ENCODE measurements at regions of chr20 and their contacts with region 1.

Region 1: GRCh38 chr20:31723319-31724078 is 831 bp upstream of the BCL2L1 start:
- DNase-seq: peak; percentile 96 to 98
- ATAC-seq: peak; percentile 81 to 84
- H3K4me3 ChIP-seq: peak overlapping the region; percentile 76 to 87 (median 82)
- H3K27ac ChIP-seq: peak overlapping the region; percentile 97 to 98 (median 97)
- H3K4me1 ChIP-seq: peaks cover 19 to 23% of the 10 kb centered on the region in 2 donors
- H3K27me3 ChIP-seq: no peaks in the 10 kb centered on the region
- CTCF ChIP-seq: peak; percentile 97 to 99 (median 98)
- POLR2A ChIP-seq: peak; percentile 85 to 92

Region 2: DNA sequence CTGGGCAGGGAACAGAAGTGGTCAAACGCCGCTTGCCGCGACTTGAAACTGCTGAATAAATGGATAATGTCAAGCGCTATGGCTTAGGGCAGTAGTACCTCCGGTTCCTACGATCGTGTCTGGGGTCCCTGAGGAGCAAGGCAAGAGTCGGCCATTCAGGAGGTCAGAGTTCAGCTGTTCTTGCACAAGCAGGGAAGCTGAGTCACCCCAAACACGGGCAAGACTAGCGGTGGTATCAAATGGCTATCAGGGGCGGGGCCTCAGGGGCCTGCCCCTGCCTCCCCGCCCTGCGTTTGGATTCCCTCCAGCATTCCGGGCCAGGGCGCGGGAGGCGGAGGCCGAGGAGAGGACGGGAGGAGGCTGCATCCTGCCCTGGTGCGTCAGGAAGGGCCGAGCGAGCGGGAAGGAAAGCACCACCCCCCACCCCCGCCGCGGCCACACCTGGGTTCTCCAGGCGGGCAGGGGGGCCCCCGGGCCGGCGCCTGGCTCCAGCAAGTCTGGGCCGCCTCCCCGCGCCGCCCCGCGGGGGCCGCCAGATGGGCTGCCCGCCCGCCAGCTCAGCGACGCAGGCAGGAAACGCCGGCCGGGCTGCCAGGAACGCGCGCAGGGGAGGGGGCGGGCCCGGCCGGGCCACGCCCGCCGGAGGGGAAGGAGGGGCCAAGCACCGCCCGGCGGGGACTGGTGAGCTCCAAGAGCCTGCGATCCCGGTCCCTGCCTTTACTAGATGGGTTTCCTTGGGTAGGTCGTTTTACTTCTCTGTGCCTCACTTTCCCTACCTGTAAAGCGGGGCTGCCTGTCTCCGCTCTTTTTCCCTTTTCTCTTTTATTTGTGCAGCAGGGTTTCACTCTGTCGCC is 150.6 kb before region 1 on chr20:
- in situ Hi-C with region 1: loop called in 1 of 4 experiments (anchors 25 kb)
- intact Hi-C with region 1: loop called (anchors 5 kb)
- DNase-seq: peak; percentile 96 to 98
- ATAC-seq: peak; percentile 92
- H3K4me3 ChIP-seq: peak overlapping the region; percentile 54 to 68 (median 56)
- H3K27ac ChIP-seq: peak overlapping the region; percentile 86 to 93 (median 89)
- H3K4me1 ChIP-seq: peaks cover 13 to 19% of the 10 kb centered on the region in 2 donors
- H3K27me3 ChIP-seq: no peaks in the 10 kb centered on the region
- CTCF ChIP-seq: peak in 3 of 5 experiments; percentile 7 to 25 (median 23)
- POLR2A ChIP-seq: peak; percentile 86 to 89

Region 3: DNA sequence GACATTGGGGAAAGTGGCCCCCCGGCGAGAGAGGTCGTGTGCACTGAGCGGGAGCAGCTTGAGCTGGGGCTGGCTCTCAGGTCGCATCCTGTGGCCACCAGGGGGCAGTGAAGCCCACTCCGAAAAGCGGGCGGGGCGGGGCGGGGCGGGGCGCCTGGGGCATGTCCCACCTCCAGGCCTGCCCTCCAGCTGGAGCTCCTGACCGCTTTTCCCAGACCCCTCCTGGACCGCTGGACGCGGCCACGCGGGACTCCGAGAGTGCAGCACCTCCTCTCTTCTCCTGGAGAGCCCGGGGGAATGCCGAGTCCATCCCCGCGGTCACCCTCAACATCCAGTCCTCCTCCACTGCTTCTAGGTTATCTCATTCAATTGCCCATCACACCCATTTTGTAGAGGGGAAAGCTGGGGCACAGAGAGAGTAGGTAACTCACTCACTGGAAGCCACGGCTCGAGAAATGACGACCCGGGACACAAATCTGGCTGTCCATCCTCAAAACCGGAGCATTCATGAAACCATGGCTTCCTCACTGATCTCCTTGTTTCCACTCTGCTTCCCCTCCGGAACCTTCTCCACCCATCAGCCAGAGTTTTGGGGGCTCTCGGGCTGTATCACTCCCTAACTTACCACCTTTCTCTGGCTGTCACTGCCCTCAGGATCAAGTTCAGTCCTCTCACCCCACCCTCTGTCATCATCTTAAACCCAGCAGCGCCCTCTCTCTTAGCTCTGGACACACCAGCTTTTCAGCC is 61.7 kb before region 1 on chr20:
- in situ Hi-C with region 1: loop called (anchors 5 kb)
- intact Hi-C with region 1: loop called (anchors 1 kb)
- DNase-seq: peak; percentile 60 to 74
- ATAC-seq: peak; percentile 83 to 86
- H3K4me3 ChIP-seq: peak overlapping the region; percentile 30 to 62 (median 46)
- H3K27ac ChIP-seq: peak overlapping the region; percentile 63 to 98 (median 80)
- H3K4me1 ChIP-seq: peaks cover 35 to 38% of the 10 kb centered on the region in 2 donors
- H3K27me3 ChIP-seq: no peaks in the 10 kb centered on the region
- CTCF ChIP-seq: peak; percentile 53 to 94 (median 90)
- POLR2A ChIP-seq: peak; percentile 41 to 71

Region 4: DNA sequence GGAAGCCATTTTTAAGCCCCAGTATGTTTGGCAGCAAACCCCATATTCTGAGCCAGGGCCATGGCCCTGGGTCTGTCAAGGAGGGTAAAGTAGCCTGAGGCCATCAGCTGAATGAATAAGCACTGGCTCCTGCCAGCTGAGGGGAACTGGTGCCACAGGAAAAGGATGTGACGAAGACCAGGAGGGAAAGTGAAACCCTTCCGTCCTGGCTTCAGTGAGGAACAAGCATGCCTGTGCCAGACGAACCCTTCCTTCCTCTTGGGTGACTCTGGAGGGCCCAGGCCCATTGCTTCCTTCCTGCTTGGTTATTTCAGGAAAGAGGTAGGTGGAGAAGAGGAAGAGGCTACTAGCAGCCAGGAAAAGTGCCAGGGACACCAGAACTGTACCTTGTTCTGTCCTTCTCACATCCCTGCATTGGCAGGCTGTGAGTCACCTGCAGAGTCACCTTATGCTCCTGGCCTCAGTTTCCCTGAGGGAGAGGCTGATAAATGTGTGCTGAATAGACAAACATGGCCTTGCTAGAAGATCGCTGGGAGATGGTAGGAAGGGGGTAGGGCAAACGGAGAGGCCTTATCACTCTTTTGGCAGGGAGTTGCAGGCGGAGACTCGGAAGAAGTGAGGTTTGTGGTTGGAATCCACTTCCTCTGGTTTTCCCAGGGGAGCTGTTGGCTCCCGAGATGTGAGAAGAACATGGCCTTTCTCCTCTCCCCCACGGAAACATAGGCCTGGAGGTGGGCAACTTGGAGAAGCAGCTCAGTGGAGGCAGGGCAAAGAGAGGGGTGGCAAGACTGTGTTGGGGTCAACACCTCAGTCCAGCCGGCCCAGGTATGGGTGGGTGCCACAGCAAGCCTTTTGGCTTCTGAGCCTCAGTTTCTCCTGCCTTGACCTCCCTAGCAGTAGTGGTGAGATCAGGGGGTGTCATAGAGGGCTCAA is 48.3 kb before region 1 on chr20:
- in situ Hi-C with region 1: no loop called
- intact Hi-C with region 1: loop called (anchors 2 kb)
- DNase-seq: peak; percentile 50 to 73
- ATAC-seq: peak in 1 of 2 donors; percentile 15
- H3K4me3 ChIP-seq: peak overlapping the region in 1 of 4 donors; percentile 16
- H3K27ac ChIP-seq: peak overlapping the region; percentile 82 to 98 (median 92)
- H3K4me1 ChIP-seq: peaks cover 81 to 93% of the 10 kb centered on the region in 2 donors
- H3K27me3 ChIP-seq: no peaks in the 10 kb centered on the region
- CTCF ChIP-seq: no peak
- POLR2A ChIP-seq: no peak

Region 5: GRCh38 chr20:31738729-31739561 is 15.4 kb after region 1 on chr20 and contains the start of gene TPX2:
- in situ Hi-C with region 1: no loop called
- intact Hi-C with region 1: loop called (anchors 1 kb)
- DNase-seq: peak; percentile 95 to 96
- ATAC-seq: peak; percentile 100
- H3K4me3 ChIP-seq: peak within 1 kb of the TSS; percentile 65 to 95 (median 70)
- H3K27ac ChIP-seq: peak within 1 kb of the TSS; percentile 79 to 88 (median 86)
- H3K4me1 ChIP-seq: peaks cover 9 to 12% of the 10 kb centered on the region in 2 donors
- H3K27me3 ChIP-seq: no peaks in the 10 kb centered on the region
- CTCF ChIP-seq: peak in 3 of 5 experiments; percentile 18 to 27 (median 24)
- POLR2A ChIP-seq: peak; percentile 69 to 70
- total RNA-seq, gene TPX2: 0.46 to 1.9 (median 1.0) TPM

Region 6: GRCh38 chr20:31835977-31836852 is 112.7 kb after region 1 on chr20:
- in situ Hi-C with region 1: loop called in 1 of 4 experiments (anchors 25 kb)
- intact Hi-C with region 1: loop called (anchors 2 kb)
- DNase-seq: peak; percentile 89 to 94
- ATAC-seq: peak; percentile 81 to 96
- H3K4me3 ChIP-seq: no peak overlapping the region
- H3K27ac ChIP-seq: peak overlapping the region; percentile 79 to 95 (median 80)
- H3K4me1 ChIP-seq: peaks cover 14 to 33% of the 10 kb centered on the region in 2 donors
- H3K27me3 ChIP-seq: no peaks in the 10 kb centered on the region
- CTCF ChIP-seq: no peak
- POLR2A ChIP-seq: no peak

Region 7: GRCh38 chr20:31951530-31952453 is 228.3 kb after region 1 on chr20 and contains the start of gene PDRG1:
- in situ Hi-C with region 1: no loop called
- intact Hi-C with region 1: loop called (anchors 10 kb)
- DNase-seq: peak; percentile 90 to 93
- ATAC-seq: peak; percentile 95 to 97
- H3K4me3 ChIP-seq: peak within 1 kb of the TSS; percentile 87 to 99 (median 90)
- H3K27ac ChIP-seq: peak within 1 kb of the TSS; percentile 83 to 92 (median 86)
- H3K4me1 ChIP-seq: peaks cover 10 to 11% of the 10 kb centered on the region in 2 donors
- H3K27me3 ChIP-seq: no peaks in the 10 kb centered on the region
- CTCF ChIP-seq: peak; percentile 83 to 97 (median 89)
- POLR2A ChIP-seq: peak; percentile 72 to 77
- total RNA-seq, gene PDRG1: 7.0 to 12.9 (median 9.6) TPM